T-cell (primary cell): ENCODE measurements at regions of chr17 and their contacts with region 1.

Region 1: GRCh38 chr17:77254951-77255825 is 114.4 kb downstream of the SEC14L1 start:
- DNase-seq: no peak
- ATAC-seq: no peak
- H3K4me3 ChIP-seq: no peak overlapping the region
- H3K4me3 Mint-ChIP-seq: no peak overlapping the region
- H3K27ac ChIP-seq: no peak overlapping the region
- H3K27ac Mint-ChIP-seq: no peak overlapping the region
- H3K4me1 ChIP-seq: no peaks in the 10 kb centered on the region
- H3K4me1 Mint-ChIP-seq: no peaks in the 10 kb centered on the region
- H3K27me3 ChIP-seq: peaks cover 0 to 48% of the 10 kb centered on the region in 2 experiments
- H3K27me3 Mint-ChIP-seq: peaks cover 7 to 20% of the 10 kb centered on the region in 2 donors

Region 2: GRCh38 chr17:77054936-77055335 is 200.3 kb before region 1 on chr17:
- CTCF ChIA-PET with region 1: interaction called in 1 of 2 experiments, 13 read pairs
- POLR2A ChIA-PET with region 1: no interaction called
- DNase-seq: no peak
- ATAC-seq: no peak
- H3K4me3 ChIP-seq: no peak overlapping the region
- H3K4me3 Mint-ChIP-seq: no peak overlapping the region
- H3K27ac ChIP-seq: no peak overlapping the region
- H3K27ac Mint-ChIP-seq: no peak overlapping the region
- H3K4me1 ChIP-seq: peaks cover 0 to 7% of the 10 kb centered on the region in 2 experiments
- H3K4me1 Mint-ChIP-seq: peaks cover 0 to 6% (median 2%) of the 10 kb centered on the region in 3 donors
- H3K27me3 ChIP-seq: peaks cover 0 to 66% of the 10 kb centered on the region in 2 experiments
- H3K27me3 Mint-ChIP-seq: peaks cover 12 to 31% of the 10 kb centered on the region in 2 donors